ENCODE measurements at regions of chr10 and their contacts with region 1.

Region 1: GRCh38 chr10:132793871-132794849 is 8.2 kb upstream of the NKX6-2 start:
- DNase-seq: no peak
- ATAC-seq: peak in 1 of 8 donors; percentile 9
- H3K4me3 ChIP-seq: no peak overlapping the region
- H3K27ac ChIP-seq: no peak overlapping the region
- H3K4me1 ChIP-seq: no peaks in the 10 kb centered on the region
- H3K27me3 ChIP-seq: peaks cover 7 to 44% (median 31%) of the 10 kb centered on the region in 7 donors
- CTCF ChIP-seq: peak in 1 of 9 donors; percentile 7

Region 2: DNA sequence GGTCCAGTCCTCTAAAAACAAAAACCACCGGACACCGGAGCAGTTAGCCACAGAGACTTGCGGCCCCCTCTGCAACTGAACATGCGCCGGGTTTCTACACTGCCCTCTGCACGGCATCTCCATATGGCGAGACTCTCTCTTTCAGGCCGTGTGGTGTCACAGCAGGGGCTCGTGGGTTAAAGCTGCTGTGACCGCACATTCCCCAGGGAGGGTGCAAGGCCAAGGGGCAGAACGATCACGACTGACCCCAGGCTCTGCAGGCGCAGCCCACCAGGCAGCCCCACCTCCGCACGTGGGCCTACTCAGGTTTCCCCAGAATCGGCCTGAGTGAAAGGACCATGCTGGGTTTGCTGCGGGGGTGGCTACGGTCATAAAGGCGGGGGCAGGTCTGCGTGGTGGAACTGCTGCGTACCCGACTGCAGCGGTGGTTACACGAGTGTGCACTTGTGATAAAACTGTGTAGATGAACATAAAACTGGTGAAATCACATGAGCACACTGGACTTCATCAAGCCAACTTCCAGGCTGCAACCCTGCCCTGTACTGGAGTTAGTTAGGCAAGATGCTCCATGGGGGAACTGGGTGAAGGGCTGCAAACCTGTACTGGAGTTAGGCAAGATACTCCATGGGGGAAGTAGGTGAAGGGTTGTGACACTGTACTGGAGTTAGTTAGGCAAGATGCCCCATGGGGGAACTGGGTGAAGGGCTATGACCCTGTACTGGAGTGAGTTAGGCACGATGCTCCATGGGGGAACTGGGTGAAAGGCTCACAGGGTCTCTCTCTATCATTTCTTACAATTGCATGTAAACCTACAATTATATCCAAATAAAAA is 974.7 kb before region 1 on chr10:
- intact Hi-C with region 1: loop called in 1 of 10 experiments (anchors 5 kb)
- DNase-seq: no peak
- ATAC-seq: no peak
- H3K4me3 ChIP-seq: no peak overlapping the region
- H3K27ac ChIP-seq: no peak overlapping the region
- H3K4me1 ChIP-seq: no peaks in the 10 kb centered on the region
- H3K27me3 ChIP-seq: peaks cover 0 to 74% (median 42%) of the 10 kb centered on the region in 7 donors
- CTCF ChIP-seq: no peak

Region 3: GRCh38 chr10:132281915-132282666 is 512.1 kb before region 1 on chr10:
- intact Hi-C with region 1: no loop called
- DNase-seq: no peak
- ATAC-seq: no peak
- H3K4me3 ChIP-seq: no peak overlapping the region
- H3K27ac ChIP-seq: no peak overlapping the region
- H3K4me1 ChIP-seq: peaks cover 0 to 4% (median 0%) of the 10 kb centered on the region in 9 donors
- H3K27me3 ChIP-seq: peaks cover 0 to 21% (median 5%) of the 10 kb centered on the region in 7 donors
- CTCF ChIP-seq: no peak

Region 4: DNA sequence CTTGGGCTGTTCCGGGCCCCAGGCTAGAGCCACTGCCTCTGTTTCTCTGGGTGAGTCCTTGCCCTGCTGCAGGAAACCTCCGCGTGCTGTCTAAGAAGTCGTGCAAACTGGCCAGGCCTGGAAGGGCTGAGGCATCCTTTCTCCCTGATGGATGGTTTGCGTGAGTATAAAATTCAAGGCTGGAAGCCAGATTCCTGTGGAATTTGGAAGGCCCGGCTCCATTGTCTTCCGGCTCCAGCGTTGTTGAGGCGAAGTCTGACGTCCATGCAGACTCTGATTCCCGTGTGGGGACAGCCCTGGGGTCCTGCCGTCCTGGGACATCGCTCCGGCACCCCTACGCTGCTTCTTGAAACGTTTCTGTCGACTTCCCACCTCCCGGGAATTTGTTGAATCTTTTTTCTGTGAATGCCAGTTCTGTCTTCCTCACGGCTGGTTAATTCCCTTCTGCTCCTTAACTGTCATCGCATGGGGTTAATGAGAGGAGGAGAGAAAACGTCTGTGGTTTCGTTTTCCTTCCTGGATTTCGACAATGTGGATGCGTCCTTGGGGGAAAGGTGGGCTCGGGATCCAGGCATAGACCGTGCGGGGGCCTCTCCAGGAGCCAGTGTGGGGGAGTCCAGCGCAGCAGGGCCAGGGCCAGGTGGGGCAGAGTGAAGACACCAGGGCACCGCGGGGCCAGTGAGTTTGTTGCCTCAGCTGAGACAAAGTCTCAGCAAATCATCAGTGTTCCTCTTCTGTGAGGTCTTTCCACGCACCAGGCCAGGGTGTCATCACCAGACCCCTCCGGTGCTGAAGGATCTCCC is 181.6 kb after region 1 on chr10:
- intact Hi-C with region 1: no loop called
- DNase-seq: no peak
- ATAC-seq: no peak
- H3K4me3 ChIP-seq: no peak overlapping the region
- H3K27ac ChIP-seq: no peak overlapping the region
- H3K4me1 ChIP-seq: no peaks in the 10 kb centered on the region
- H3K27me3 ChIP-seq: peaks cover 0 to 80% (median 57%) of the 10 kb centered on the region in 7 donors
- CTCF ChIP-seq: no peak